Ascending aorta (tissue), 2 donors: ENCODE measurements at regions of chr4 and their contacts with region 1.

Region 1: GRCh38 chr4:86586160-86586572 is 7.9 kb upstream of the PTPN13 start:
- DNase-seq: no peak
- H3K4me3 ChIP-seq: no peak overlapping the region
- H3K27ac ChIP-seq: no peak overlapping the region
- H3K4me1 ChIP-seq: peaks cover 0 to 5% of the 10 kb centered on the region in 2 donors
- H3K27me3 ChIP-seq: no peaks in the 10 kb centered on the region
- CTCF ChIP-seq: no peak

Region 2: GRCh38 chr4:85837439-85837733 is 748.8 kb before region 1 on chr4:
- intact Hi-C with region 1: no loop called
- DNase-seq: no peak
- H3K4me3 ChIP-seq: no peak overlapping the region
- H3K27ac ChIP-seq: peak overlapping the region in 1 of 2 donors; percentile 76
- H3K4me1 ChIP-seq: peaks cover 4 to 18% of the 10 kb centered on the region in 2 donors
- H3K27me3 ChIP-seq: no peaks in the 10 kb centered on the region
- CTCF ChIP-seq: no peak

Region 3: GRCh38 chr4:86497980-86498862 is 87.9 kb before region 1 on chr4:
- intact Hi-C with region 1: loop called (anchors 5 kb)
- DNase-seq: no peak
- H3K4me3 ChIP-seq: no peak overlapping the region
- H3K27ac ChIP-seq: no peak overlapping the region
- H3K4me1 ChIP-seq: peaks cover 0 to 3% of the 10 kb centered on the region in 2 donors
- H3K27me3 ChIP-seq: no peaks in the 10 kb centered on the region
- CTCF ChIP-seq: peak; percentile 21 to 74 (median 60)